PC-9 (cell line): ENCODE measurements at regions of chr2 and their contacts with region 1.

Region 1: DNA sequence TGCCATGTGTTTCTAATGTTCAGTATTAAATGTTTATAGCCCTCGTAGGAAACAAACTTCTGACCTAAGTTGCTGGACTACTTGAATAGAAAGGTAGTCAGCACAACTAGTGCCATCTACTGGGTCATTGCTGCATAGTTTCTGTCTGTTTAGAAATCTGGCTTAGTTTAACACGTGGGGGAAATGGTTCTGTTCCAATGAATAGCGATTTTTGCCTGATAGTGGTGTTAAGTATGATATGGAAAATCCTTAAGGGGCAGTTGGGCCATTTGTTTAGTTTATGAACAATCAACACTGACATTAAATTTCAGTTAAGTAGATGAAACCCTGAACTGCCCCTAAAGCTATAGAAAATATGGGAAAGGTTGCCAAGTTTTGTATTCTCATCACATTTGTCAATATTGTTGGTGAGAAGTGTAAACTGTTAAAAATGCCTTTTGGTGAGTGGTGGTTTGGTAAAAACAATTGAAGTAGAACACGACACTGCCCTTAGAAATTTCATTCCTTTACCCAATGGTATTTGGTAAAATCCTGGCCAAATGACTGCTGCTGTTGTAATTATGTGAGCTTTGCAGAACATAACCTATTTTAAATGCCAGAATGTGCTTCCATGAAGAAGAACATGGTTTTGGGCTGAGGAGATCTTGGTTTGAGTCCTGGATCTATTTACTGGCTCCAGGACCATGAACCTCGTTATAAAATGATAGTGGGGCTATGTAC is 13.2 kb downstream of the NABP1 start:
- DNase-seq: peak in 1 of 2 experiments; percentile 71
- H3K4me3 ChIP-seq: no peak overlapping the region
- H3K27ac ChIP-seq: peak overlapping the region; percentile 51
- H3K4me1 ChIP-seq: peaks cover 56% of the 10 kb centered on the region
- H3K27me3 ChIP-seq: no peaks in the 10 kb centered on the region
- CTCF ChIP-seq: peak; percentile 67

Region 2: DNA sequence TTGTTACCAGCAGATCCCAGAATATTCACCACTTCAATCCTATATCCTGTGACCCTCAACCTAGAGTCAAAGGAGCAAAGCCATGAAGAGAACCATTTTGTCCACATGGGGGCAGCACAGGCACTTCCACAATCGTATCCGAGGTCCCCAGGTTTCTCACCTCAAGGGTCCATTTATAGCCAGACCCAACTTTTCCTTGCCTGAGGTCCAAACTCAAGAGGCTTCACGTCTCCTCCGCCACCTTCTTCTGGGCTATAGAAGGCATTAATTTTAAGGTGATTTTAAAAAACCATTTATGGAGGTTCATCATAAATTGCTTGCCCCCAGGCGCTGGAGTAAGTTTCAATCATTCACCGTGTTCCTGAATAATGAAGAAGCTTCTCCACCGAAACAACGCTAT is 124.8 kb before region 1 on chr2:
- CTCF ChIA-PET with region 1: interaction called, 4 read pairs
- POLR2A ChIA-PET with region 1: no interaction called
- intact Hi-C with region 1: loop called (anchors 1 kb)
- DNase-seq: peak; percentile 48 to 63
- H3K4me3 ChIP-seq: no peak overlapping the region
- H3K27ac ChIP-seq: peak overlapping the region; percentile 63
- H3K4me1 ChIP-seq: peaks cover 46% of the 10 kb centered on the region
- H3K27me3 ChIP-seq: no peaks in the 10 kb centered on the region
- CTCF ChIP-seq: peak; percentile 77

Region 3: DNA sequence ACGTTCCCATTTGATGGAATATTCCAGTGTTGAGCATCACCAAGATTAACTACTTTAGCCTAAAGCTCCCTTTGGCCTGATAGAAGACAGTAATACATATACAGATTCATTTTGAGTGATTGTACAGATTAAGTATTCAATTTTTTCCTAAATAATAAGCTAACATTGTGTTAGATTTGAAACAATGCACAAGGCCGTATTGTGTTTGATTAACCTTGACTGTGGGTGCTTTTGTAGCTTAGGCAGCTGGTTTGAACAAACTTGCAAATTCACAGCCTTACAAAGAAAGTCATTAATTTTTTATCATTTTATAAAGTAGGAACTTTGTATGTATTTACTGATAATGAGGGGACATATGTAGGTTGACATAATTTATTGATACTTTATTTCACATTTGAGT is 16.4 kb after region 1 on chr2:
- CTCF ChIA-PET with region 1: no interaction called
- POLR2A ChIA-PET with region 1: interaction called, 14 read pairs
- intact Hi-C with region 1: no loop called
- DNase-seq: no peak
- H3K4me3 ChIP-seq: no peak overlapping the region
- H3K27ac ChIP-seq: no peak overlapping the region
- H3K4me1 ChIP-seq: no peaks in the 10 kb centered on the region
- H3K27me3 ChIP-seq: no peaks in the 10 kb centered on the region
- CTCF ChIP-seq: no peak